CD4-positive, alpha-beta T cell (primary cell): ENCODE measurements at regions of chr11 and their contacts with region 1.

Region 1: GRCh38 chr11:95790123-95790932 is at the start of gene CEP57:
- DNase-seq: peak; percentile 87 to 97 (median 90)
- ATAC-seq: peak; percentile 54
- H3K4me3 ChIP-seq: peak within 1 kb of the TSS; percentile 93
- H3K4me3 Mint-ChIP-seq: peak within 1 kb of the TSS; percentile 96
- H3K27ac ChIP-seq: peak within 1 kb of the TSS; percentile 99 to 100
- H3K27ac Mint-ChIP-seq: peak within 1 kb of the TSS; percentile 100
- H3K4me1 ChIP-seq: peaks cover 24% of the 10 kb centered on the region
- H3K4me1 Mint-ChIP-seq: peaks cover 61% of the 10 kb centered on the region
- H3K27me3 ChIP-seq: no peaks in the 10 kb centered on the region
- H3K27me3 Mint-ChIP-seq: no peaks in the 10 kb centered on the region
- CTCF ChIP-seq: no peak
- total RNA-seq, gene CEP57: 43.5 to 46.6 TPM

Region 2: DNA sequence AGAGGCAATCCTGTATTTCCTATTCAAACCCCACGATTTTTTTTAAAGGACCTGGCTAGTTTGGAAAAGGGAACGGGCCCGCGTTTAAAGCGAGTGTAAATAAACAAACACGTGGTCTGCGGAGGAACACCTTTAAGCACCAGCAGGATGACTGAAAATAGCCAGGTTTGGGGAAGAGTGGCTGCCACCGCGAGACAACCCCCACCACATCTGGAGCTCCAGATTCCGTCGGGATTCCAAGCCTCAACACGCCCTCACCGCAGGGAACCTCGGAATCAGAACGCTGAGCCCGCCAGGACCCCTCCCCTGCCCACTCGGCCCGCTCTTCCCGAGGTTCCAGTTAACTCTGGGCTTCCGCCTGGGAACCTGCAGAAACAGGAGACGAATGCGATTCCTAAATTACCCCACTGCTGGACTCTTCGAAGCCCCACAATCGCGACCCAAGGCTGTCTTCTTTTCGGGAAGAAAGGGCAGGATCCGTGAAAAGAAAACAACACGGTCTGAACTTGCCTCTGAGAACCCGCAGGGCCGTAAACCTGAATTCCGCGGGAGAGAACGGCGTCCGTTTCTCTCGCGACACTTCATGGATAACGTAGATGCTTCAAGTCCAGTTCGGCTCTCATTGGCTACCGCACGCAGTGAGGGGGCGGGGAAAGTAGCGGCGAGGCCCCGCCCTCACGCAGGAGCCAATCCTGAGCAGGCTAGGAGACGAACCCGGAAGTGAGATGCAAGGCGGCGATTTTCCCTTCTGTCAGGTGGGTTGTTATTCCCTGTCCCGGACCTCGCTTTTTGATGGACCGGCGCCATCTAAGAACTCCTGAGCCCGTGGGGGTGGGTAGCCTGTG is 1296.8 kb before region 1 on chr11 and contains the starts of genes ANKRD49 and MRE11:
- CTCF ChIA-PET with region 1: no interaction called
- POLR2A ChIA-PET with region 1: no interaction called
- intact Hi-C with region 1: loop called in 1 of 2 experiments (anchors 5 kb)
- DNase-seq: peak; percentile 91 to 99 (median 95)
- ATAC-seq: peak; percentile 98
- H3K4me3 ChIP-seq: peak within 1 kb of the TSS; percentile 83
- H3K4me3 Mint-ChIP-seq: peak within 1 kb of the TSS; percentile 97
- H3K27ac ChIP-seq: peak within 1 kb of the TSS; percentile 65 to 86
- H3K27ac Mint-ChIP-seq: peak within 1 kb of the TSS; percentile 92
- H3K4me1 ChIP-seq: peaks cover 8% of the 10 kb centered on the region
- H3K4me1 Mint-ChIP-seq: peaks cover 54% of the 10 kb centered on the region
- H3K27me3 ChIP-seq: no peaks in the 10 kb centered on the region
- H3K27me3 Mint-ChIP-seq: no peaks in the 10 kb centered on the region
- CTCF ChIP-seq: no peak
- total RNA-seq, gene ANKRD49: 54.4 to 56.4 TPM
- total RNA-seq, gene MRE11: 17.0 to 18.6 TPM

Region 3: DNA sequence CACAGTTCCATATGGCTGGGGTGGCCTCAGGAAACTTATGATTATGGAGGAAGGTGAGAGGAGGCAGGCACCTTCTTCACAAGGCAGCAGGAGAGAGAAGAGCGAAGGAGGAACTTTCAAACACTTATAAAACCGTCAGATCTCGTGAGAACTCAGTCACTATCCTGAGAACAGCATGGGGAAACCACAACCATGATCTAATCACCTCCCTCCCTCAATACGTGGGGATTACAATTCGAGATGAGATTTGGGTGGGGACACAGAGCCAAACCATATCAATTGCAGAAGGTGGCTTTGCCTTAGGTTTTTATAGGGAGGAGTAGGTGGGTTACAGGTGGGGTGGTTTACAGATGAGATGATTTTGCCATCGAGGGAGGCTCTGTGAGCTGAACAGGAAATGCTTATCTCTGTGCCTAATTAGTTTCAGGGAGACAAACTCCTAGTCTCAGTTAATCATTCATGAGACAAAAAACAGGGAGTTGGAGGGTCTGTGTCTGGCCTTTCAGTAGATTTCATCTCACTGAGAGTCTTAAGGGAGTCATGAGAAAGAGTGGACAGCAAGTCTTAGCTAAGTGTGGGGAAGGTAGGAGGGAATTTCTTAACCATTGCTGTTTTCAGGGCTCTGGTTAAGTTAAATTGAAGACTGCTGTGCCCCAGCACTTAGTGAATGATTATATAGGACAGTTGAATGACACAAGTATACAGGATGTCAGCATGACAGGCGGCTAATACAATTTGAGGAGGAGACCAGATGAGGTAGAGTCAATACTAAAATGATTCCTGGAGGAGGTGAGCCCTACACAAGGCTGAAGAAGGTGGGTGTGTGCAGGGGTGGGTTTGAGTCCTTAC is 864.7 kb before region 1 on chr11:
- CTCF ChIA-PET with region 1: no interaction called
- POLR2A ChIA-PET with region 1: interaction called, 11 read pairs
- intact Hi-C with region 1: no loop called
- DNase-seq: peak in 2 of 14 experiments; percentile 20 to 35
- ATAC-seq: peak; percentile 27
- H3K4me3 ChIP-seq: no peak overlapping the region
- H3K4me3 Mint-ChIP-seq: peak overlapping the region; percentile 47
- H3K27ac ChIP-seq: peak overlapping the region in 1 of 2 donors; percentile 71
- H3K27ac Mint-ChIP-seq: peak overlapping the region; percentile 91
- H3K4me1 ChIP-seq: peaks cover 44% of the 10 kb centered on the region
- H3K4me1 Mint-ChIP-seq: peaks cover 73% of the 10 kb centered on the region
- H3K27me3 ChIP-seq: no peaks in the 10 kb centered on the region
- H3K27me3 Mint-ChIP-seq: no peaks in the 10 kb centered on the region
- CTCF ChIP-seq: no peak

Region 4: DNA sequence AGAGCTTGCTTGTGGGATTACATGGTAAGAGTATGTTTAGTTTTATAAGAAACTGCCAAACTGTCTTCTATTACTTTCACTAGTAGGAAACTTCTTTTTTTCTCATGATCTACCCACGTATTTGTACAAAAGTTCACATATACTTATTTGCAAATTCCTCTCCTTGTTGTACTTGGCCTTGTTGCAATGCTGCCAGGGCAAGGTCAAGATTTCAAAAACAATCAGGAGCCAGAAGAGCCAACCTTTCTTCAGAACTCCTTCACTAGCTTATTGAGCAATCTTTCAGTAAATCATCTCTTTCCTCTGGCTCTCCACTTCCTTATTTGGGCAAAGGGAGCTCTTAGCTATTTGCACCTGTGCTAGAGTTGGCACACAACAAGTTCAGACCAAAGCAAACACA is 713.9 kb before region 1 on chr11:
- CTCF ChIA-PET with region 1: no interaction called
- POLR2A ChIA-PET with region 1: interaction called, 10 read pairs
- intact Hi-C with region 1: no loop called
- DNase-seq: no peak
- ATAC-seq: no peak
- H3K4me3 ChIP-seq: no peak overlapping the region
- H3K4me3 Mint-ChIP-seq: no peak overlapping the region
- H3K27ac ChIP-seq: no peak overlapping the region
- H3K27ac Mint-ChIP-seq: no peak overlapping the region
- H3K4me1 ChIP-seq: no peaks in the 10 kb centered on the region
- H3K4me1 Mint-ChIP-seq: peaks cover 5% of the 10 kb centered on the region
- H3K27me3 ChIP-seq: no peaks in the 10 kb centered on the region
- H3K27me3 Mint-ChIP-seq: no peaks in the 10 kb centered on the region
- CTCF ChIP-seq: no peak

Region 5: GRCh38 chr11:95156916-95157541 is 633.3 kb before region 1 on chr11:
- CTCF ChIA-PET with region 1: interaction called, 5 read pairs
- POLR2A ChIA-PET with region 1: interaction called, 52 read pairs
- intact Hi-C with region 1: no loop called
- DNase-seq: no peak
- ATAC-seq: no peak
- H3K4me3 ChIP-seq: no peak overlapping the region
- H3K4me3 Mint-ChIP-seq: no peak overlapping the region
- H3K27ac ChIP-seq: no peak overlapping the region
- H3K27ac Mint-ChIP-seq: peak overlapping the region; percentile 46
- H3K4me1 ChIP-seq: peaks cover 34% of the 10 kb centered on the region
- H3K4me1 Mint-ChIP-seq: peaks cover 56% of the 10 kb centered on the region
- H3K27me3 ChIP-seq: no peaks in the 10 kb centered on the region
- H3K27me3 Mint-ChIP-seq: no peaks in the 10 kb centered on the region
- CTCF ChIP-seq: no peak

Region 6: GRCh38 chr11:95308512-95309035 is 481.8 kb before region 1 on chr11:
- CTCF ChIA-PET with region 1: no interaction called
- POLR2A ChIA-PET with region 1: no interaction called
- intact Hi-C with region 1: no loop called
- DNase-seq: peak in 1 of 14 experiments; percentile 35
- ATAC-seq: no peak
- H3K4me3 ChIP-seq: no peak overlapping the region
- H3K4me3 Mint-ChIP-seq: no peak overlapping the region
- H3K27ac ChIP-seq: no peak overlapping the region
- H3K27ac Mint-ChIP-seq: no peak overlapping the region
- H3K4me1 ChIP-seq: no peaks in the 10 kb centered on the region
- H3K4me1 Mint-ChIP-seq: peaks cover 11% of the 10 kb centered on the region
- H3K27me3 ChIP-seq: no peaks in the 10 kb centered on the region
- H3K27me3 Mint-ChIP-seq: no peaks in the 10 kb centered on the region
- CTCF ChIP-seq: no peak

Region 7: GRCh38 chr11:95802806-95803205 is 12.5 kb after region 1 on chr11:
- CTCF ChIA-PET with region 1: interaction called, 3 read pairs
- POLR2A ChIA-PET with region 1: interaction called, 14 read pairs
- intact Hi-C with region 1: no loop called
- DNase-seq: no peak
- ATAC-seq: no peak
- H3K4me3 ChIP-seq: no peak overlapping the region
- H3K4me3 Mint-ChIP-seq: no peak overlapping the region
- H3K27ac ChIP-seq: no peak overlapping the region
- H3K27ac Mint-ChIP-seq: no peak overlapping the region
- H3K4me1 ChIP-seq: peaks cover 5% of the 10 kb centered on the region
- H3K4me1 Mint-ChIP-seq: peaks cover 10% of the 10 kb centered on the region
- H3K27me3 ChIP-seq: no peaks in the 10 kb centered on the region
- H3K27me3 Mint-ChIP-seq: no peaks in the 10 kb centered on the region
- CTCF ChIP-seq: no peak

Region 8: GRCh38 chr11:96389720-96390487 is 599.6 kb after region 1 on chr11 and contains the starts of genes CCDC82 and JRKL:
- CTCF ChIA-PET with region 1: interaction called, 5 read pairs
- POLR2A ChIA-PET with region 1: interaction called, 45 read pairs
- intact Hi-C with region 1: loop called (anchors 2 to 5 kb)
- DNase-seq: peak; percentile 96 to 99 (median 98)
- ATAC-seq: peak; percentile 96
- H3K4me3 ChIP-seq: peak within 1 kb of the TSS; percentile 86
- H3K4me3 Mint-ChIP-seq: peak within 1 kb of the TSS; percentile 91
- H3K27ac ChIP-seq: peak within 1 kb of the TSS; percentile 84
- H3K27ac Mint-ChIP-seq: peak within 1 kb of the TSS; percentile 88
- H3K4me1 ChIP-seq: peaks cover 18% of the 10 kb centered on the region
- H3K4me1 Mint-ChIP-seq: peaks cover 51% of the 10 kb centered on the region
- H3K27me3 ChIP-seq: no peaks in the 10 kb centered on the region
- H3K27me3 Mint-ChIP-seq: no peaks in the 10 kb centered on the region
- CTCF ChIP-seq: no peak
- total RNA-seq, gene CCDC82: 23.7 to 24.4 TPM
- total RNA-seq, gene JRKL: 3.0 to 3.5 TPM